Naive thymus-derived CD4-positive, alpha-beta T cell (primary cell): ENCODE measurements at regions of chr20 and their contacts with region 1.

Region 1: GRCh38 chr20:44521484-44522481 is at the start of gene SERINC3:
- DNase-seq: peak; percentile 96 to 99 (median 98)
- ATAC-seq: peak; percentile 99
- H3K4me3 ChIP-seq: peak within 1 kb of the TSS; percentile 95
- H3K4me3 Mint-ChIP-seq: peak within 1 kb of the TSS; percentile 82 to 93 (median 88)
- H3K27ac ChIP-seq: peak within 1 kb of the TSS; percentile 99
- H3K27ac Mint-ChIP-seq: peak within 1 kb of the TSS; percentile 87 to 99 (median 96)
- H3K4me1 ChIP-seq: peaks cover 30 to 34% of the 10 kb centered on the region in 2 donors
- H3K4me1 Mint-ChIP-seq: peaks cover 31 to 68% (median 58%) of the 10 kb centered on the region in 7 donors
- H3K27me3 ChIP-seq: no peaks in the 10 kb centered on the region
- H3K27me3 Mint-ChIP-seq: no peaks in the 10 kb centered on the region
- total RNA-seq, gene SERINC3: 59.7 to 85.3 (median 78.9) TPM

Region 2: GRCh38 chr20:44069203-44070011 is 452.4 kb before region 1 on chr20:
- CTCF ChIA-PET with region 1: no interaction called
- POLR2A ChIA-PET with region 1: no interaction called
- intact Hi-C with region 1: loop called in 1 of 2 experiments (anchors 5 kb)
- DNase-seq: peak; percentile 47 to 97 (median 90)
- ATAC-seq: peak; percentile 65
- H3K4me3 ChIP-seq: peak overlapping the region; percentile 60
- H3K4me3 Mint-ChIP-seq: peak overlapping the region; percentile 70 to 93 (median 86)
- H3K27ac ChIP-seq: peak overlapping the region; percentile 97
- H3K27ac Mint-ChIP-seq: peak overlapping the region; percentile 94 to 100 (median 99)
- H3K4me1 ChIP-seq: peaks cover 31 to 77% of the 10 kb centered on the region in 2 donors
- H3K4me1 Mint-ChIP-seq: peaks cover 40 to 96% (median 81%) of the 10 kb centered on the region in 7 donors
- H3K27me3 ChIP-seq: no peaks in the 10 kb centered on the region
- H3K27me3 Mint-ChIP-seq: peaks cover 0 to 16% (median 0%) of the 10 kb centered on the region in 5 donors

Region 3: GRCh38 chr20:44217342-44218092 is 304.3 kb before region 1 on chr20:
- CTCF ChIA-PET with region 1: no interaction called
- POLR2A ChIA-PET with region 1: no interaction called
- intact Hi-C with region 1: loop called in 1 of 2 experiments (anchors 1 kb)
- DNase-seq: peak; percentile 41 to 80 (median 68)
- ATAC-seq: peak; percentile 68
- H3K4me3 ChIP-seq: peak overlapping the region; percentile 57
- H3K4me3 Mint-ChIP-seq: peak overlapping the region; percentile 76 to 90 (median 86)
- H3K27ac ChIP-seq: peak overlapping the region; percentile 75
- H3K27ac Mint-ChIP-seq: peak overlapping the region; percentile 81 to 99 (median 94)
- H3K4me1 ChIP-seq: peaks cover 29 to 33% of the 10 kb centered on the region in 2 donors
- H3K4me1 Mint-ChIP-seq: peaks cover 40 to 85% (median 72%) of the 10 kb centered on the region in 7 donors
- H3K27me3 ChIP-seq: no peaks in the 10 kb centered on the region
- H3K27me3 Mint-ChIP-seq: no peaks in the 10 kb centered on the region

Region 4: GRCh38 chr20:44475694-44476560 is 45.9 kb before region 1 on chr20 and contains the start of gene TTPAL:
- CTCF ChIA-PET with region 1: no interaction called
- POLR2A ChIA-PET with region 1: interaction called, 9 read pairs
- intact Hi-C with region 1: loop called (anchors 1 kb)
- DNase-seq: peak; percentile 83 to 95 (median 89)
- ATAC-seq: peak; percentile 98
- H3K4me3 ChIP-seq: peak within 1 kb of the TSS; percentile 65
- H3K4me3 Mint-ChIP-seq: peak within 1 kb of the TSS; percentile 87 to 96 (median 91)
- H3K27ac ChIP-seq: peak within 1 kb of the TSS; percentile 97
- H3K27ac Mint-ChIP-seq: peak within 1 kb of the TSS; percentile 86 to 97 (median 94)
- H3K4me1 ChIP-seq: peaks cover 12 to 17% of the 10 kb centered on the region in 2 donors
- H3K4me1 Mint-ChIP-seq: peaks cover 14 to 43% (median 31%) of the 10 kb centered on the region in 7 donors
- H3K27me3 ChIP-seq: no peaks in the 10 kb centered on the region
- H3K27me3 Mint-ChIP-seq: no peaks in the 10 kb centered on the region
- total RNA-seq, gene TTPAL: 12.0 to 20.7 (median 17.0) TPM

Region 5: DNA sequence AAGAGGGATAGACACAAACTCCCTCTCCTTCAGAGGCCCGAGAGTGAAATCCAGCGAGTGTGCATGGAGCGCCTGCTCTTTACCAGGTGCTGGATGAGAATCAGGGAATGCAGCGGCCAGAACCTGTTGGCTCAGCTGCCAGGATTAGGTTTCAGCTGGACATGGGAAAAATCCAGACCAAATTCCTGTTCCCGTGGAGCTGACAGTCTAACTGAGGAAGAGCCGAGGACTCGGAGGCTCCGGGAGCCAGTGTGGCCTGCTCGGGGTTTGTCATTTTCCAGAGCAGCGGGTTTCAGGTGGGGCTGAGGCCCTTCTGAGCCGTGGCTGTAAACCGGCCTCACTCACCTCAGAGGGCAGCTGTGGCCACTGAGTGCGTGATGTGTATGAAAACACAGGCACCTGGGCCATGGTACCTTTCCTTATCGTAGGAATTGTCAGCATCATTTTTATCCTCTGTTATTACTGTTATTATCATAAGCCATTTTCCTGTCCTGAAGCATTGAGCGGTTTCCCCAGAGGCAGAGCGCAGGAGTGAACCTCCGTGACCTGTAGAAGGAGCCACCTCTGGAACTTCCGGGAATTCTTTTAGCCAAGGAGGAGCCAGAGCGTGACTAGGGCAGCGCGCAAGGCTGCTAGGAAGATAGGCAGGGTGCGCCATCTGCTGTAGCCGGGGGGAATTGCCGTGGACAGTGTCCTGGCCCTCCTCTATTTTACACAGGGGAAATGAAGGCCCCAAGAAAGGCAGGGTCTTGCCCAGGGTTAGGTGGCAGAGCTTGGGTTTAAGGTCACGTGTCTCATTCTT is 87.9 kb after region 1 on chr20:
- CTCF ChIA-PET with region 1: no interaction called
- POLR2A ChIA-PET with region 1: interaction called, 3 read pairs
- intact Hi-C with region 1: loop called (anchors 1 kb)
- DNase-seq: peak; percentile 70 to 82 (median 77)
- ATAC-seq: peak; percentile 91
- H3K4me3 ChIP-seq: peak overlapping the region; percentile 2
- H3K4me3 Mint-ChIP-seq: peak overlapping the region; percentile 30 to 86 (median 74)
- H3K27ac ChIP-seq: peak overlapping the region; percentile 73
- H3K27ac Mint-ChIP-seq: peak overlapping the region; percentile 88 to 100 (median 98)
- H3K4me1 ChIP-seq: peaks cover 8 to 24% of the 10 kb centered on the region in 2 donors
- H3K4me1 Mint-ChIP-seq: peaks cover 14 to 39% (median 25%) of the 10 kb centered on the region in 7 donors
- H3K27me3 ChIP-seq: no peaks in the 10 kb centered on the region
- H3K27me3 Mint-ChIP-seq: no peaks in the 10 kb centered on the region

Region 6: GRCh38 chr20:44678242-44678641 is 156.5 kb after region 1 on chr20:
- CTCF ChIA-PET with region 1: no interaction called
- POLR2A ChIA-PET with region 1: no interaction called
- intact Hi-C with region 1: loop called (anchors 5 kb)
- DNase-seq: no peak
- ATAC-seq: no peak
- H3K4me3 ChIP-seq: no peak overlapping the region
- H3K4me3 Mint-ChIP-seq: no peak overlapping the region
- H3K27ac ChIP-seq: no peak overlapping the region
- H3K27ac Mint-ChIP-seq: no peak overlapping the region
- H3K4me1 ChIP-seq: no peaks in the 10 kb centered on the region
- H3K4me1 Mint-ChIP-seq: no peaks in the 10 kb centered on the region
- H3K27me3 ChIP-seq: no peaks in the 10 kb centered on the region
- H3K27me3 Mint-ChIP-seq: no peaks in the 10 kb centered on the region

Region 7: GRCh38 chr20:44706301-44707017 is 184.7 kb after region 1 on chr20:
- CTCF ChIA-PET with region 1: no interaction called
- POLR2A ChIA-PET with region 1: no interaction called
- intact Hi-C with region 1: no loop called
- DNase-seq: no peak
- ATAC-seq: no peak
- H3K4me3 ChIP-seq: no peak overlapping the region
- H3K4me3 Mint-ChIP-seq: no peak overlapping the region
- H3K27ac ChIP-seq: no peak overlapping the region
- H3K27ac Mint-ChIP-seq: no peak overlapping the region
- H3K4me1 ChIP-seq: no peaks in the 10 kb centered on the region
- H3K4me1 Mint-ChIP-seq: no peaks in the 10 kb centered on the region
- H3K27me3 ChIP-seq: peaks cover 0 to 3% of the 10 kb centered on the region in 2 donors
- H3K27me3 Mint-ChIP-seq: peaks cover 0 to 2% (median 0%) of the 10 kb centered on the region in 5 donors

Region 8: GRCh38 chr20:44942264-44942973 is 420.6 kb after region 1 on chr20:
- CTCF ChIA-PET with region 1: no interaction called
- POLR2A ChIA-PET with region 1: no interaction called
- intact Hi-C with region 1: no loop called
- DNase-seq: no peak
- ATAC-seq: no peak
- H3K4me3 ChIP-seq: no peak overlapping the region
- H3K4me3 Mint-ChIP-seq: peak overlapping the region in 1 of 10 donors; percentile 34
- H3K27ac ChIP-seq: no peak overlapping the region
- H3K27ac Mint-ChIP-seq: peak overlapping the region in 6 of 9 donors; percentile 2 to 45 (median 22)
- H3K4me1 ChIP-seq: no peaks in the 10 kb centered on the region
- H3K4me1 Mint-ChIP-seq: peaks cover 0 to 11% (median 0%) of the 10 kb centered on the region in 7 donors
- H3K27me3 ChIP-seq: no peaks in the 10 kb centered on the region
- H3K27me3 Mint-ChIP-seq: no peaks in the 10 kb centered on the region